Activated T-helper 2 cell treated with anti-CD3 and anti-CD28 coated beads, Interferon-gamma antibody, Interleukin-2, Interleukin-4, amounts not matched to agents 10 μg/mL and 5 μg/mL and 100 μg/mL, durations not matched to agents 14 hours and 24 hours and 36 hours (primary cell): ENCODE measurements at regions of chr9 and their contacts with region 1.

Region 1: DNA sequence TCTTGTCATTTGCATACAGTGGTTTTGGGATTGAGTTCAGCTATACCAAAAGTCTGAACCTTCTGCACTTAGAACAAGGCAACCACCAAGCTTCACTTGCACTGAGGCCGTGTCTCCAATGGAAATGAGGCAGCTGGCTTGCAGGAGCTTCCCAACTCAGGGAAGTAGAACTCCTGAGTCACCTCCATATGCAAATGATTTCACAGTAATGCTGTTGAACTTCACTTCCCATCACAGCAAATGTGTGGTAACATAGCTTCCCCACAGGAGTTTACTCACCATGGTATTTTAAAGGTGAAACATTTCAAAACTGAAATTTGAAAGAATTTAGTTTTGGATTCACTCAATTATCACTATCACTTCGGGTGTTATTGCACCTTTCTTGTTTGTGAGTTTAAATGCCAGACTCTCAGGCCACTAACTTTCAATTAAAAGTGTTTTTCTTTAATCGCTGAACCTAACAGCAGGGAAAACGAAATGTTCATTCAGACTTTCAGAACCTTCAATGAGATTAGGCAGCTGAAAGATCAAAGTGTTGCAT is 9.0 kb downstream of the CD274 start:
- DNase-seq: no peak
- H3K4me3 Mint-ChIP-seq: peak overlapping the region; percentile 51
- H3K27ac Mint-ChIP-seq: peak overlapping the region; percentile 74
- H3K4me1 Mint-ChIP-seq: peaks cover 63% of the 10 kb centered on the region
- H3K27me3 Mint-ChIP-seq: no peaks in the 10 kb centered on the region

Region 2: GRCh38 chr9:5408596-5408995 is 50.8 kb before region 1 on chr9:
- intact Hi-C with region 1: no loop called
- DNase-seq: no peak
- H3K4me3 Mint-ChIP-seq: no peak overlapping the region
- H3K27ac Mint-ChIP-seq: no peak overlapping the region
- H3K4me1 Mint-ChIP-seq: peaks cover 10% of the 10 kb centered on the region
- H3K27me3 Mint-ChIP-seq: no peaks in the 10 kb centered on the region

Region 3: GRCh38 chr9:5493679-5494511 is 34.5 kb after region 1 on chr9:
- intact Hi-C with region 1: loop called (anchors 1 kb)
- DNase-seq: no peak
- H3K4me3 Mint-ChIP-seq: no peak overlapping the region
- H3K27ac Mint-ChIP-seq: peak overlapping the region; percentile 43
- H3K4me1 Mint-ChIP-seq: peaks cover 20% of the 10 kb centered on the region
- H3K27me3 Mint-ChIP-seq: no peaks in the 10 kb centered on the region

Region 4: GRCh38 chr9:5510360-5510931 is 51.1 kb after region 1 on chr9 and contains the start of gene PDCD1LG2:
- intact Hi-C with region 1: loop called (anchors 1 kb)
- DNase-seq: no peak
- H3K4me3 Mint-ChIP-seq: peak within 1 kb of the TSS; percentile 80
- H3K27ac Mint-ChIP-seq: peak within 1 kb of the TSS; percentile 95
- H3K4me1 Mint-ChIP-seq: peaks cover 55% of the 10 kb centered on the region
- H3K27me3 Mint-ChIP-seq: no peaks in the 10 kb centered on the region
- total RNA-seq, gene PDCD1LG2: 1.7 and 2.0 TPM in 2 replicates

Region 5: GRCh38 chr9:5518171-5518936 is 59.0 kb after region 1 on chr9:
- intact Hi-C with region 1: loop called (anchors 2 kb)
- DNase-seq: no peak
- H3K4me3 Mint-ChIP-seq: no peak overlapping the region
- H3K27ac Mint-ChIP-seq: peak overlapping the region; percentile 40
- H3K4me1 Mint-ChIP-seq: peaks cover 33% of the 10 kb centered on the region
- H3K27me3 Mint-ChIP-seq: no peaks in the 10 kb centered on the region

Region 6: GRCh38 chr9:5582835-5583195 is 123.5 kb after region 1 on chr9:
- intact Hi-C with region 1: loop called (anchors 1 kb)
- DNase-seq: peak; percentile 46
- H3K4me3 Mint-ChIP-seq: no peak overlapping the region
- H3K27ac Mint-ChIP-seq: peak overlapping the region; percentile 88
- H3K4me1 Mint-ChIP-seq: peaks cover 69% of the 10 kb centered on the region
- H3K27me3 Mint-ChIP-seq: no peaks in the 10 kb centered on the region

Region 7: GRCh38 chr9:5851445-5851844 is 392.1 kb after region 1 on chr9:
- intact Hi-C with region 1: loop called (anchors 5 kb)
- DNase-seq: peak; percentile 48
- H3K4me3 Mint-ChIP-seq: peak overlapping the region; percentile 15
- H3K27ac Mint-ChIP-seq: peak overlapping the region; percentile 75
- H3K4me1 Mint-ChIP-seq: peaks cover 67% of the 10 kb centered on the region
- H3K27me3 Mint-ChIP-seq: no peaks in the 10 kb centered on the region